GM10248 (cell line): ENCODE measurements at regions of chr3 and their contacts with region 1.

Region 1: GRCh38 chr3:17213102-17213501 is 328.3 kb downstream of the PLCL2 start:
- DNase-seq: no peak
- CTCF ChIP-seq: no peak

Region 2: DNA sequence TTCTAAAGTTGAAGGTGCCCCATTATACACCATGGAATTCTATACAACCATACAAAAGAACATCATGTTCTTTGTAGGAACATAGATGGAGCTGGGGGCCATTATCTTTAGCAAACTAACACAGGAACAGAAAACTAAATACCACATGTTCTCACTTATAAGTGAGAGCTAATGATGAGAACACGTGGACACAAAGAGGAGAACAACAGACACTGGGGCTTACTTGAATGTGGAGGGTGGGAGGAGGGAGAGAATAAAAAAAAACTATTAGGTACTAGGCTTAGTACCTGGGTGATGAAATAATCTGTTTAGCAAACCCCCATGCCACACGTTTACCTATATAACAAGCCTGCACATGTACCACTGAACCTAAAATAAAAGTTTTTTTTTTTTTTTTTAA is 14.4 kb after region 1 on chr3:
- CTCF ChIA-PET with region 1: interaction called, 10 read pairs
- POLR2A ChIA-PET with region 1: no interaction called
- DNase-seq: no peak
- CTCF ChIP-seq: no peak